Activated CD8-positive, alpha-beta T cell treated with anti-CD3 and anti-CD28 coated beads, Interleukin-2, amount 10 ng/mL, durations not matched to agents 7 days and 5 days (primary cell): ENCODE measurements at regions of chr19 and their contacts with region 1.

Region 1: GRCh38 chr19:39445265-39446111 is at the start of gene SUPT5H:
- DNase-seq: peak; percentile 99
- ATAC-seq: peak; percentile 94
- H3K4me3 Mint-ChIP-seq: peak within 1 kb of the TSS; percentile 93
- H3K27ac Mint-ChIP-seq: peak within 1 kb of the TSS; percentile 95
- H3K4me1 Mint-ChIP-seq: peaks cover 53% of the 10 kb centered on the region
- H3K27me3 Mint-ChIP-seq: peaks cover 2% of the 10 kb centered on the region
- total RNA-seq, gene SUPT5H: 144 to 147 TPM

Region 2: DNA sequence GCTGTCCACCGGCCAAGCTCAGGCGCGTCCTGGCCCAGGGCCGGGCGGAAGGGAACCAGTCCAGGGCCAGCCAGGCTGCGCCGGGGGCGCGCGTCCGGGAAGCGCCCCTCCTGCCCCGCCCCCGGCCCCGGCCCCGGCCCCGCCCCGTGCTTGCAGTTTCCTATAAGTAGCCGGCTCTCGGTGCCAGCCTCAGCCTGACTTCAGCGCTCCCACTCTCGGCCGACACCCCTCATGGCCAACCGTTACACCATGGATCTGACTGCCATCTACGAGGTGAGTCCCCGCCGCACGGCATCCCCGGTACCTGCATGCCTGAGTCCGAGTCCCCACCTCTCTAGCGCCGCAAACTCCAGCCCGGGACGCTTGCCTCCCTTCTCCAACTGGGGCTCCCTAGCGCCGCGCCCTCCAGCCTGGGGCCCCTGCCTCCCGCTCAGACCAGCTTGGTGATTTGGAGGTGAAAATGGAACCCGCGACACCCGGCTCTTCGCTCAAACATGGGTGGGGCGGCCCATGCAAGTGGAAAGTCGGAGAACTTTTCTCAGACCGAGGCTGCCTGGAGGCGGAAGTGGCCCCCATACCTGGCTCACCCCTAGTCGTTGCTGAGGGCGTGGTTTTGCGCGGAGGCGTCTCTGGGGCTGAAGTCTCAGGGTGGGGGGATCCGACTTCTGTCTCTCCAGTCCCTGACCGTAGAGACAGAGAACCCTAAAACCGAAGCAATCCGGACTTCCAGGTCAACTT is 38.7 kb before region 1 on chr19 and contains the start of gene ZFP36:
- CTCF ChIA-PET with region 1: interaction called, 7 read pairs
- POLR2A ChIA-PET with region 1: interaction called, 10 read pairs
- DNase-seq: peak; percentile 90
- ATAC-seq: peak; percentile 41
- H3K4me3 Mint-ChIP-seq: peak within 1 kb of the TSS; percentile 97
- H3K27ac Mint-ChIP-seq: peak within 1 kb of the TSS; percentile 99
- H3K4me1 Mint-ChIP-seq: peaks cover 60% of the 10 kb centered on the region
- H3K27me3 Mint-ChIP-seq: no peaks in the 10 kb centered on the region
- total RNA-seq, gene ZFP36: 72.4 to 91.4 TPM

Region 3: GRCh38 chr19:39465956-39466747 is 20.7 kb after region 1 on chr19:
- CTCF ChIA-PET with region 1: no interaction called
- POLR2A ChIA-PET with region 1: no interaction called
- DNase-seq: no peak
- ATAC-seq: no peak
- H3K4me3 Mint-ChIP-seq: no peak overlapping the region
- H3K27ac Mint-ChIP-seq: no peak overlapping the region
- H3K4me1 Mint-ChIP-seq: peaks cover 3% of the 10 kb centered on the region
- H3K27me3 Mint-ChIP-seq: no peaks in the 10 kb centered on the region

Region 4: DNA sequence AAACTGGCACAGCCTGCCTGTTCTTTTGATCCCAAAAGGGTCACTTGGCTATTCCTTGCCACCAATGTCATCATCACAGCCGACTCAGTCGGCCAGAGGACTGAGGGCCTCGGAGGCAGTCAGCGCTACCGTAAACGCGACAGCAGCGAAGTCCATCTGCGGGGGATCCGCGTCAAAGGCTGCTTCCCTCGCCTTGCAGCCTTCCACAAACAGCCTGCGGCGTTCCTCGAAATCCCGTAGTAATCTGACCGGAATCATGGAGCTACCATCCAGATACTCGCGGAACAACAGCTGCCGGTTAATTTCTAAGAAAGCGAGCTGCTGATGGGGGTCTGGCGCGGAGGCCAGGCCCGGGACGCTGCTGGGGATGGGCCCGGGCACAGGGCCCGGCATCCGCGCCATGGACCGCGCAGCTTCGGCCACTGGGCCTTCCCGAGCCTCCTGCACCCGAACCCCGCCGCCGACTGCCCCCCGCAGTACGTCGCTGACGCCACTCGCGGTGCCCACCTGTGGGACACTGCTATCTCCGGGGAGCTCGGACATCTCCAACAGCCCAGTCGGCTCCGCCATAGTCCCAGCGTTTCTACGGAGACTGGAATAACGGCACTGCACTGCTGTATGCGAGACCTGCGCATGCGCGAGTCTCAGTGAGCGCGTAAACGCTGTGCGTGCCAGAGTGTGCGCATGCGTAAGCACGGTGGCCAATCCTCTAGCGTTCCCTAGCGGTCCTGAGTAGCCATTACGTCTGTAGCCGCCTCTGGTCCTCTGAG is 86.9 kb after region 1 on chr19 and contains the start of gene EID2B:
- CTCF ChIA-PET with region 1: interaction called, 30 read pairs
- POLR2A ChIA-PET with region 1: interaction called, 11 read pairs
- DNase-seq: peak; percentile 95
- ATAC-seq: peak; percentile 93
- H3K4me3 Mint-ChIP-seq: peak within 1 kb of the TSS; percentile 92
- H3K27ac Mint-ChIP-seq: peak within 1 kb of the TSS; percentile 87
- H3K4me1 Mint-ChIP-seq: peaks cover 23% of the 10 kb centered on the region
- H3K27me3 Mint-ChIP-seq: no peaks in the 10 kb centered on the region
- total RNA-seq, gene EID2B: 4.1 to 4.3 TPM

Region 5: GRCh38 chr19:39539519-39540332 is 94.2 kb after region 1 on chr19 and contains the start of gene EID2:
- CTCF ChIA-PET with region 1: interaction called, 18 read pairs
- POLR2A ChIA-PET with region 1: interaction called, 6 read pairs
- DNase-seq: peak; percentile 97
- ATAC-seq: peak; percentile 91
- H3K4me3 Mint-ChIP-seq: peak within 1 kb of the TSS; percentile 95
- H3K27ac Mint-ChIP-seq: peak within 1 kb of the TSS; percentile 94
- H3K4me1 Mint-ChIP-seq: peaks cover 58% of the 10 kb centered on the region
- H3K27me3 Mint-ChIP-seq: no peaks in the 10 kb centered on the region
- total RNA-seq, gene EID2: 18.9 to 19.9 TPM

Region 6: DNA sequence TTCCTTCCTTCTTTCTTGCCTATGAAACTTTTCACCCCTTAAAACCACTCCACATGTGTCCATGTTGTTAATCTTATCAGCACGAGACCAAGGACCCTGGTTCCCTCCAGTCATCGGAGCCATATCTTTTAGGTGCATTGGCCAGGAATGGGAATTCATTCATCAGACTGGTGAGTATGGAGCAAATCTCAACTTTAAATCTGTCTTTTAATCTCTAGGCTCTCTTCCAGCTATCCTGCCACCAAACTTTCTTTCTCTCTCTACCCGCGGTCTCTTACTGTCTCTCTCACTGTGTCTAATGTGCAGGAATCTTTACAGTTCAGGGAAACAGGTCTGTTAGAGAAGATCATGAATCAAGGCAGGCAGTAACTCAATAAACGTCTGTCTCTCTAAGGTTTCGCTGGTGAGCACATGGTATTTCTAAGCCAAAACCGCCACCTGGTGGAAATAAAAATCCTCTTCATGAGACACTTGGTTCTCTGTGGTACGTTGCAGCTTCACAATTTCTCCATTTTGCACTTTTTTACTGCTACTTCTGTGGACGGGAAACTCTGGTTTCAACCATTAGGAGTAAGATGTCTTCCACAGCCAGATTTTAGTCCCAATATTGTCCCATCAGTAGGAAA is 226.4 kb after region 1 on chr19:
- CTCF ChIA-PET with region 1: interaction called, 15 read pairs
- POLR2A ChIA-PET with region 1: no interaction called
- DNase-seq: peak; percentile 70
- ATAC-seq: peak; percentile 86
- H3K4me3 Mint-ChIP-seq: no peak overlapping the region
- H3K27ac Mint-ChIP-seq: no peak overlapping the region
- H3K4me1 Mint-ChIP-seq: peaks cover 22% of the 10 kb centered on the region
- H3K27me3 Mint-ChIP-seq: peaks cover 22% of the 10 kb centered on the region